ENCODE measurements at regions of chr16 and their contacts with region 1.

Region 1: GRCh38 chr16:55471448-55472097 is 7.4 kb upstream of the MMP2 start:
- DNase-seq: peak; percentile 60
- H3K4me3 Mint-ChIP-seq: no peak overlapping the region
- H3K27ac Mint-ChIP-seq: peak overlapping the region; percentile 59
- H3K4me1 Mint-ChIP-seq: peaks cover 5% of the 10 kb centered on the region
- H3K27me3 Mint-ChIP-seq: no peaks in the 10 kb centered on the region

Region 2: DNA sequence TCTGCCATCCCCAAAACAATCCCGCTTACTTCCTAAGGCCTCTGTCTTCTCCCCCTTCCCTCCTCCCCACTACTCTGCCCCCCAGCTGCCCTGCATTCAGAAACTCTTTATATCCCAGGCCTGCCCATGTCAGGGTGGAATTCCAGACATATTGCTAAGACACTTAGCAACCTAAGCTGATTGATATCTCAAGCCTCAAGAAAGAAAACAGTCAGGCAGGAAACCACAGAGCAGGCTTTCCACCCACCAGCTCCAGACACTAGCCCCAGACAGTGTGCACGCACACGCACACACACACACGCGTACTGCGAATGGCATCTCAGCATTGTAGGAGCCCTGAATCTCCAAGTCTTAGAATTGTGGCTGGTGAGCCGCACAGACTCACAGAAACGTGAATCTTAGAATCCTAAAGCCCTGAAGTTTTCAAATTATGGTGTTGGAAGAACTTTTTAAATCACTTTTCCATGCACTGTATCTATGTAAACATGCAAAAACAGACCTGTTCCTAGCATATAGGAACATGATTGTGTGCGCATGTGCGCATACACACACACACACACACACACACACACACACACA is 28.5 kb after region 1 on chr16:
- intact Hi-C with region 1: loop called (anchors 1 kb)
- DNase-seq: peak; percentile 83
- H3K4me3 Mint-ChIP-seq: peak overlapping the region; percentile 25
- H3K27ac Mint-ChIP-seq: peak overlapping the region; percentile 9
- H3K4me1 Mint-ChIP-seq: peaks cover 18% of the 10 kb centered on the region
- H3K27me3 Mint-ChIP-seq: peaks cover 4% of the 10 kb centered on the region